GM12878 (cell line): ENCODE measurements at regions of chr12 and their contacts with region 1.

Region 1: GRCh38 chr12:48988030-48988649 is 10.0 kb downstream of the WNT1 start:
- DNase-seq: no peak
- ATAC-seq: peak; percentile 87
- H3K4me3 ChIP-seq: no peak overlapping the region
- H3K27ac ChIP-seq: no peak overlapping the region
- H3K4me1 ChIP-seq: peaks cover 8% of the 10 kb centered on the region
- H3K27me3 ChIP-seq: peaks cover 0 to 12% of the 10 kb centered on the region in 2 experiments; a peak in 3 of 4 replicates
- CTCF ChIP-seq: peak; percentile 83 to 92 (median 88)
- EP300 ChIP-seq: no peak
- POLR2A ChIP-seq: no peak
- RAD21 ChIP-seq: peak; percentile 55

Region 2: GRCh38 chr12:48690990-48691389 is 297.1 kb before region 1 on chr12:
- CTCF ChIA-PET with region 1: no interaction called
- POLR2A ChIA-PET with region 1: no interaction called
- RAD21 ChIA-PET with region 1: no interaction called
- SMC1A ChIA-PET with region 1: no interaction called
- in situ Hi-C with region 1: no loop called
- intact Hi-C with region 1: no loop called
- DNase-seq: no peak
- ATAC-seq: no peak
- H3K4me3 ChIP-seq: no peak overlapping the region
- H3K27ac ChIP-seq: no peak overlapping the region
- H3K4me1 ChIP-seq: no peaks in the 10 kb centered on the region
- H3K27me3 ChIP-seq: no peaks in the 10 kb centered on the region
- CTCF ChIP-seq: no peak
- EP300 ChIP-seq: no peak
- POLR2A ChIP-seq: no peak
- RAD21 ChIP-seq: no peak

Region 3: GRCh38 chr12:48857278-48857994 is 130.7 kb before region 1 on chr12:
- CTCF ChIA-PET with region 1: interaction called, 59 read pairs
- POLR2A ChIA-PET with region 1: interaction called, 8 read pairs
- RAD21 ChIA-PET with region 1: interaction called, 43 read pairs
- SMC1A ChIA-PET with region 1: interaction called, 40 read pairs
- in situ Hi-C with region 1: no loop called
- intact Hi-C with region 1: no loop called
- DNase-seq: no peak
- ATAC-seq: peak; percentile 58
- H3K4me3 ChIP-seq: no peak overlapping the region
- H3K27ac ChIP-seq: no peak overlapping the region
- H3K4me1 ChIP-seq: peaks cover 3% of the 10 kb centered on the region; the same call in 1 of the 2 replicates
- H3K27me3 ChIP-seq: no peaks in the 10 kb centered on the region
- CTCF ChIP-seq: no peak
- EP300 ChIP-seq: no peak
- POLR2A ChIP-seq: no peak
- RAD21 ChIP-seq: no peak

Region 4: GRCh38 chr12:48903982-48904411 is 84.1 kb before region 1 on chr12:
- CTCF ChIA-PET with region 1: interaction called, 19 read pairs
- POLR2A ChIA-PET with region 1: interaction called, 3 read pairs
- RAD21 ChIA-PET with region 1: interaction called, 12 read pairs
- SMC1A ChIA-PET with region 1: interaction called, 7 read pairs
- in situ Hi-C with region 1: no loop called
- intact Hi-C with region 1: no loop called
- DNase-seq: peak; percentile 20
- ATAC-seq: peak; percentile 97
- H3K4me3 ChIP-seq: peak overlapping the region; percentile 40; the same call in 1 of the 2 replicates
- H3K27ac ChIP-seq: no peak overlapping the region
- H3K4me1 ChIP-seq: peaks cover 8% of the 10 kb centered on the region; the same call in 1 of the 2 replicates
- H3K27me3 ChIP-seq: no peaks in the 10 kb centered on the region; a peak in 1 of 4 replicates
- CTCF ChIP-seq: peak; percentile 66 to 81 (median 75)
- EP300 ChIP-seq: no peak
- POLR2A ChIP-seq: no peak
- RAD21 ChIP-seq: peak; percentile 41

Region 5: GRCh38 chr12:48936379-48936979 is 51.7 kb before region 1 on chr12:
- CTCF ChIA-PET with region 1: interaction called, 27 read pairs
- POLR2A ChIA-PET with region 1: interaction called, 4 read pairs
- RAD21 ChIA-PET with region 1: interaction called, 8 read pairs
- SMC1A ChIA-PET with region 1: interaction called, 5 read pairs
- in situ Hi-C with region 1: no loop called
- intact Hi-C with region 1: no loop called
- DNase-seq: no peak
- ATAC-seq: peak; percentile 95
- H3K4me3 ChIP-seq: no peak overlapping the region
- H3K27ac ChIP-seq: no peak overlapping the region
- H3K4me1 ChIP-seq: no peaks in the 10 kb centered on the region
- H3K27me3 ChIP-seq: no peaks in the 10 kb centered on the region
- CTCF ChIP-seq: peak; percentile 83 to 95 (median 90)
- EP300 ChIP-seq: no peak
- POLR2A ChIP-seq: no peak
- RAD21 ChIP-seq: peak; percentile 62

Region 6: GRCh38 chr12:48957141-48958048 is 30.7 kb before region 1 on chr12 and contains the start of gene ARF3:
- CTCF ChIA-PET with region 1: interaction called, 24 read pairs
- POLR2A ChIA-PET with region 1: interaction called, 5 read pairs
- RAD21 ChIA-PET with region 1: interaction called, 7 read pairs
- SMC1A ChIA-PET with region 1: interaction called, 6 read pairs
- in situ Hi-C with region 1: no loop called
- intact Hi-C with region 1: no loop called
- DNase-seq: peak; percentile 80
- ATAC-seq: peak; percentile 93
- H3K4me3 ChIP-seq: peak within 1 kb of the TSS; percentile 95
- H3K27ac ChIP-seq: peak within 1 kb of the TSS; percentile 62
- H3K4me1 ChIP-seq: peaks cover 14% of the 10 kb centered on the region
- H3K27me3 ChIP-seq: no peaks in the 10 kb centered on the region; a peak in 1 of 4 replicates
- CTCF ChIP-seq: 0 out of 6 replicates have a peak, but pooled peaks of 1 of the 3 experiments have one; percentile 8
- EP300 ChIP-seq: no peak
- POLR2A ChIP-seq: peak; percentile 83
- RAD21 ChIP-seq: no peak
- polyA plus RNA-seq, gene ARF3: 8.7 to 13.2 TPM

Region 7: DNA sequence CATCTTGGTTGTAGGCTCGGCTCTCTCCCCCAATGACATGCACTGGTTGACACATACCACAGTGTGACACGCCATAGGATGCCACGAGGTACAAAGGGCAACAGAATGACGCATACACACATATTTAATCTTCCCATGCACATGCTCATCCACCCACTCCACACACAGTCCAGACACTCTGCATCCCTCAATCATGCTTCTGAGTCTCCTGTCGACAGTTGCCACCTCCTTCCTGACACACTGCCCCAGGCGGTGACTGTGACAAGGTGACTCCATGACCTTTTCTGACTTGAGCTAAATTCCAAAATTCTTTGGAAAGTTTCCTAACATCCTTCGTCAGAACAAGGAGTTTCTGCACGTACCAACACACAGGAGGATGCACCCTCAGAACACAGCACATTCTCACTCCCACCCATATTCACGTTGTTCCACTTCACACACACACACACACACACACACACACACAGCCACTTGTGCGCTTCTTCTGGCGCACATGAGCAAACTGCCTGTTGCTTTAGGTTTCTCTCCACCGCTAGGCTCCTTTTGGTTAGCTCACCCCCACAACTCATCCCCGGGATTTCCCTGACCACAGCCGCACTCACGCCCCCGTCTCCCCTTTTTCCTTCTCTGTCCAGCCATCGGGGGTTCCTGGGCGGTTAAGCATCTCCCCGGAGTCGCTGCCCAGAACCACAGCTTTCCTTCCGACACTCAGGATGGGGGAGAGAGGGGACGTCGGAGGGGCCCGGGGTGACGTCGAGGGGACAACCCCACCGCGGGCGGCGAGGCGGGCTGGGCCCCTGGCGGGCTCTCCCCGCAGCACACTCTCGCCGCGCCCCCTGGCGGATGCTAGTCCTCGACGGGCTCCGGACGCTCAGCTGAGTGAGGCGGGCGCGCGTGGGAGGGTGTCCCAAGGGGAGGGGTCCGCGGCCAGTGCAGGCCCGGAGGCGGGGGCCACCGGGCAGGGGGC is 10.5 kb before region 1 on chr12:
- CTCF ChIA-PET with region 1: interaction called, 106 read pairs
- POLR2A ChIA-PET with region 1: interaction called, 5 read pairs
- RAD21 ChIA-PET with region 1: interaction called, 22 read pairs
- SMC1A ChIA-PET with region 1: interaction called, 10 read pairs
- in situ Hi-C with region 1: no loop called
- intact Hi-C with region 1: no loop called
- DNase-seq: no peak
- ATAC-seq: peak; percentile 84
- H3K4me3 ChIP-seq: no peak overlapping the region; the same call in 1 of the 2 replicates
- H3K27ac ChIP-seq: no peak overlapping the region
- H3K4me1 ChIP-seq: peaks cover 35% of the 10 kb centered on the region
- H3K27me3 ChIP-seq: peaks cover 37 to 44% of the 10 kb centered on the region in 2 experiments
- CTCF ChIP-seq: peak; percentile 61 to 82 (median 70); a peak in 5 of 6 replicates
- EP300 ChIP-seq: no peak; a peak in 1 of 4 replicates
- POLR2A ChIP-seq: no peak
- RAD21 ChIP-seq: peak; percentile 50

Region 8: GRCh38 chr12:49018261-49019119 is 30.4 kb after region 1 on chr12 and contains the start of gene PRKAG1:
- CTCF ChIA-PET with region 1: interaction called, 172 read pairs
- POLR2A ChIA-PET with region 1: no interaction called
- RAD21 ChIA-PET with region 1: interaction called, 4 read pairs
- SMC1A ChIA-PET with region 1: interaction called, 3 read pairs
- in situ Hi-C with region 1: no loop called
- intact Hi-C with region 1: no loop called
- DNase-seq: peak; percentile 77
- ATAC-seq: peak; percentile 90
- H3K4me3 ChIP-seq: peak within 1 kb of the TSS; percentile 93
- H3K27ac ChIP-seq: peak within 1 kb of the TSS; percentile 93
- H3K4me1 ChIP-seq: 0 out of 2 replicates have a peak, but pooled peaks cover 3% of the 10 kb centered on the region
- H3K27me3 ChIP-seq: no peaks in the 10 kb centered on the region
- CTCF ChIP-seq: peak; percentile 57 to 71 (median 68)
- EP300 ChIP-seq: no peak
- POLR2A ChIP-seq: peak; percentile 90
- RAD21 ChIP-seq: peak; percentile 36; the same call in 1 of the 2 replicates
- polyA plus RNA-seq, gene PRKAG1: 61.5 to 70.9 TPM